Heart left ventricle (tissue), 16 donors: ENCODE measurements at regions of chr13 and their contacts with region 1.

Region 1: DNA sequence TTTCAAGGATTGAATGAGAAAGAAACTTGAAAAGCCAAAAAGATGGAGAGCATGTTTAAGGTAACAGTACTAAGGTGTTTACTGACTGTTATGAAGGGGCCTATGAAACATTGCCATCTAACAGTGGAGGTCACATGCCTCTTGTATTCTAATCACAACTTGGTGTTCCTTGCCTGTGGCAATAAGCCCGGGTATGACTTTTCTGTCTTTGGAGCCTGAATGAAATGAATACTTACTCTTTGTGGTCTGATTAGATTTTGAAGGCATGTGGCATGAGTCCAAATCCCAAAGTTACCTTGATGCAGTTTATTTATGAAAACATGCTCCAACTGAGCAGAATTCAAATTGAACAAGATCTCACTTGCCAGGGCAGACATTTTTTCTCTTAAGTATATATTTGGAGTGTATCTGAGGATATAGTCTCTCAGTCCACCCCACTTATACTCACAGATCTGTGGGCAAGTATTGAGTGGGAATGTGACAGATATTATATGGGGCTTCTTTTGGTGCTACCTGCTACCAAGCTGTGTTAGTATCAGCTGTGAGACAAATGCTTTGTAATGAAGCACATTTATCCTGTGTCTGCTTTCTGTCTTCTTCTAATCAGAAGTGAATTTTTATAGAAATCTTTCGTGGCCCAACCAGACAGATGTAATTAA is 67.5 kb downstream of the B3GLCT start:
- DNase-seq: peak in 2 of 5 donors; percentile 27 to 35
- ATAC-seq: peak; percentile 81 to 93 (median 88)
- H3K4me3 ChIP-seq: no peak overlapping the region
- H3K27ac ChIP-seq: peak overlapping the region in 9 of 12 donors; percentile 18 to 75 (median 56)
- H3K4me1 ChIP-seq: peaks cover 0 to 14% (median 0%) of the 10 kb centered on the region in 12 donors
- H3K27me3 ChIP-seq: no peaks in the 10 kb centered on the region
- CTCF ChIP-seq: no peak
- POLR2A ChIP-seq: no peak

Region 2: DNA sequence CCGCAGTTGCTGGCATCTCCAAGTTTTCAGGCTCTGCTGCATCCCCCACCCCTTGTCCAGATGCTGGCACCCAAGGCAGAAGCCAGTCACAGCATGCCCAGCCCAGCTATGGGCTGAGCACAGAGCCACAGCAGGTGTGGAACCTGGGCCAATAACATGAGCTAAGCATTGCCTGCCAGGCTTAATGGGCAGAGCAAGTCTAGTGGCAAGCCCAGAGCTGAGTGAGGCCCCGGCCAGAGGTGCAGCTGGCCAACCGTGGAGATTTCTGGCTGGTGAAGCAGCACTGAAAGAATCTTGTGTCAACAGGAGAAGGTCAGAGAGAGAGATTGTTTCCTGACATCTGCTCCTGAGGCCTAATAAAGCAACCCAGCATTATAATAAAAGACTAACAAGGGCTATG is 43.5 kb after region 1 on chr13:
- intact Hi-C with region 1: loop called in 1 of 10 experiments (anchors 5 kb)
- DNase-seq: peak; percentile 44 to 79 (median 67)
- ATAC-seq: peak; percentile 96 to 98 (median 97)
- H3K4me3 ChIP-seq: no peak overlapping the region
- H3K27ac ChIP-seq: peak overlapping the region in 8 of 12 donors; percentile 35 to 83 (median 72)
- H3K4me1 ChIP-seq: peaks cover 0 to 17% (median 0%) of the 10 kb centered on the region in 12 donors
- H3K27me3 ChIP-seq: no peaks in the 10 kb centered on the region
- CTCF ChIP-seq: no peak
- POLR2A ChIP-seq: no peak

Region 3: DNA sequence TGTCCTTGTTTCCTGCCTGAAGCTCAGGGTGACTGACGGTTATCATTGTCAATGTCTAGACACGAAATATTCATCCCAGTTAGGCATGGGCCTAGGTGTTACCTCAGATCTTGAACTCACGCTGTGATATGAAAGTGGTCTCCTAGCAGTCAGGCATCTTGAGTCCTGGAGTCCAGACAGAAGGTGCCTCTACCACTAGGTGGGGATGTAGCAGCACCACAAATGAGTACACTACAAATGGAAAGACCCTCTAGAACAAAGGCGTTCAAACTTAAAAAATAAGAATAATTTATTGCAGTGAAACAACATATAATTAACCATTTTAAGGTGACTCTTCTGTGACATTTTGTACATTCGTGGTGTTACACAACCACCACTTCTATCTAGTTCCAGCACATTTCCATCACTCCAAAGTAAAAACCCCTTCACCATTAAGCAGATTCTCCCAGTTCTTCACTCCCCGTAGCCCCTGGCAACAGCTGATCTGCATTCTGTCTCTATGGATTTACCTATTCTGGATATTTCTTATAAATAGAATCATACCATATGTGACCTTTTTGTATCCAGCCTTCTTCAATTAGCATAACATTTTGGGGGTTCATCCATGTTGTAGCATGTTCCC is 752.5 kb after region 1 on chr13:
- intact Hi-C with region 1: no loop called
- DNase-seq: peak in 4 of 5 donors; percentile 37 to 55 (median 52)
- ATAC-seq: peak; percentile 42 to 62 (median 50)
- H3K4me3 ChIP-seq: no peak overlapping the region
- H3K27ac ChIP-seq: no peak overlapping the region
- H3K4me1 ChIP-seq: peaks cover 3 to 38% (median 19%) of the 10 kb centered on the region in 12 donors
- H3K27me3 ChIP-seq: no peaks in the 10 kb centered on the region
- CTCF ChIP-seq: peak; percentile 46 to 85 (median 71)
- POLR2A ChIP-seq: no peak